ENCODE measurements at regions of chr11 and their contacts with region 1.

Region 1: GRCh38 chr11:22829231-22830081 is at the start of gene SVIP:
- DNase-seq: peak; percentile 97
- ATAC-seq: peak; percentile 92
- H3K4me3 Mint-ChIP-seq: peak within 1 kb of the TSS; percentile 89
- H3K27ac Mint-ChIP-seq: peak within 1 kb of the TSS; percentile 85
- H3K4me1 Mint-ChIP-seq: peaks cover 12% of the 10 kb centered on the region
- H3K27me3 Mint-ChIP-seq: no peaks in the 10 kb centered on the region
- total RNA-seq, gene SVIP: 47.4 to 69.9 TPM

Region 2: DNA sequence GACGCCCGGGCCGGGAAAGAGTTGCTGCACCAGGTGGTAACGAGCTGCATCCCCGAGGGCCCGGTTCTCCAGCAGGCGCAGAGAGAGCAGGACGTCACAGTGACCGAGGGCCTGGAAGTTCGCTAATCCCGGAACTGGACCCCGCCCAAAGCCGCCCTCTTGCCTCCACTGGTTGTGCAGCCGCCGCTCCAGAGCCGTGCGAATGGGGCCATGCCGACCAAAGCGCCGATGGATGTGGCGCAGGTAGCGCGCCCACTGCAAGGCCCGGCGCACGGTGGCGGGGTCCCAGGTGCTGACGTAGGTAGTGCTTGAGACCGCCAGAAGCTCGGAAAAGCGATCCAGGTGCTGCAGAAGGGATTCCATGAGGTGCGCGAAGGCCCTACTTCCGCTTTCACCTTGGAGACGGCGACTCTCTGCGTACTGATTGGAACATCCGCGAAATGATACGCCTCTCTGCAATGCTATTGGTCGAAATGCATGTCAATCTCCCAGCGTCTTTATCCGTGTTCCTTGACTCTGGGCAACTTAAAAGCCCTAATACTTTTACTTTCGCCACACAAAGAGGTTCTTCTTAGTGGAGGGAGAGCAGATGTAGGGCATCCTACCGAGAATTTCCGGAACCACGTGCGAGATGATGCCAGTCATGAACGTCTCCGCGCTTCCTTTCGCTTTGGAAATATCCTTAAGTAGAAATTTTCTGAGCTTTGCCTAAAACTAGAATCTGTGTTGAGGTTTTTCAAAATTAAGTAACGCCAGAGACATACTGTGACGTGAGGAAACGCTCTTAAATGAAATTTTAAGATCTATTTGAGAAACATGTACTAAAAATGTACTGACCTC is 203.8 kb before region 1 on chr11 and contains the start of gene FANCF:
- CTCF ChIA-PET with region 1: interaction called, 6 read pairs
- POLR2A ChIA-PET with region 1: no interaction called
- intact Hi-C with region 1: loop called (anchors 1 to 2 kb)
- DNase-seq: peak; percentile 95
- ATAC-seq: peak; percentile 97
- H3K4me3 Mint-ChIP-seq: peak within 1 kb of the TSS; percentile 97
- H3K27ac Mint-ChIP-seq: peak within 1 kb of the TSS; percentile 98
- H3K4me1 Mint-ChIP-seq: peaks cover 33% of the 10 kb centered on the region
- H3K27me3 Mint-ChIP-seq: no peaks in the 10 kb centered on the region
- total RNA-seq, gene FANCF: 10.3 to 13.7 TPM